ENCODE measurements at regions of chr11 and their contacts with region 1.

Region 1: GRCh38 chr11:116797816-116798215 is 6.1 kb upstream of the APOA5 start:
- DNase-seq: no peak
- ATAC-seq: no peak
- H3K4me3 ChIP-seq: no peak overlapping the region
- H3K27ac ChIP-seq: no peak overlapping the region
- H3K4me1 ChIP-seq: no peaks in the 10 kb centered on the region
- H3K27me3 ChIP-seq: no peaks in the 10 kb centered on the region; the same call in 1 of the 2 replicates
- CTCF ChIP-seq: no peak

Region 2: DNA sequence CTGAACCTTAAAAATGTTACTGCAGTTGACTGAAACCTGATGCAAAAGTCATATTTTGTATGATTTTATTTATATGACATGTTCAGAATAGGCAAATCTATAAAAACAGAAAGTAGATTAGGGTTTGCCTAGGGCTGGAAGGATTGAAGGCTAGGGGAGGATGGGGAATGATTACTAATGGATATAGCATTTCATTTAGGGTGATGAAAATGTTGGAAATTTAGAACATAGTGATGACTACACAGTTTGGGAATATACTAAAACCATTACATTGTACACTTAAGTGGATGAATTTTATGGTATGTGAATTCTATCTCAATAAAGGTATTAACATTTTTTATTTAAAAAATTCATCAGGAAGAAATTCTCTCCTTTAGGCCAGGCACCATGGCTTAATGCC is 323.4 kb after region 1 on chr11:
- CTCF ChIA-PET with region 1: interaction called, 11 read pairs
- POLR2A ChIA-PET with region 1: no interaction called
- in situ Hi-C with region 1: no loop called
- intact Hi-C with region 1: no loop called
- DNase-seq: no peak
- ATAC-seq: no peak
- H3K4me3 ChIP-seq: no peak overlapping the region
- H3K27ac ChIP-seq: no peak overlapping the region
- H3K4me1 ChIP-seq: no peaks in the 10 kb centered on the region
- H3K27me3 ChIP-seq: 0 out of 2 replicates have a peak, but pooled peaks cover 2% of the 10 kb centered on the region
- CTCF ChIP-seq: no peak